Caco-2 (cell line): ENCODE measurements at regions of chr4 and their contacts with region 1.

Region 1: DNA sequence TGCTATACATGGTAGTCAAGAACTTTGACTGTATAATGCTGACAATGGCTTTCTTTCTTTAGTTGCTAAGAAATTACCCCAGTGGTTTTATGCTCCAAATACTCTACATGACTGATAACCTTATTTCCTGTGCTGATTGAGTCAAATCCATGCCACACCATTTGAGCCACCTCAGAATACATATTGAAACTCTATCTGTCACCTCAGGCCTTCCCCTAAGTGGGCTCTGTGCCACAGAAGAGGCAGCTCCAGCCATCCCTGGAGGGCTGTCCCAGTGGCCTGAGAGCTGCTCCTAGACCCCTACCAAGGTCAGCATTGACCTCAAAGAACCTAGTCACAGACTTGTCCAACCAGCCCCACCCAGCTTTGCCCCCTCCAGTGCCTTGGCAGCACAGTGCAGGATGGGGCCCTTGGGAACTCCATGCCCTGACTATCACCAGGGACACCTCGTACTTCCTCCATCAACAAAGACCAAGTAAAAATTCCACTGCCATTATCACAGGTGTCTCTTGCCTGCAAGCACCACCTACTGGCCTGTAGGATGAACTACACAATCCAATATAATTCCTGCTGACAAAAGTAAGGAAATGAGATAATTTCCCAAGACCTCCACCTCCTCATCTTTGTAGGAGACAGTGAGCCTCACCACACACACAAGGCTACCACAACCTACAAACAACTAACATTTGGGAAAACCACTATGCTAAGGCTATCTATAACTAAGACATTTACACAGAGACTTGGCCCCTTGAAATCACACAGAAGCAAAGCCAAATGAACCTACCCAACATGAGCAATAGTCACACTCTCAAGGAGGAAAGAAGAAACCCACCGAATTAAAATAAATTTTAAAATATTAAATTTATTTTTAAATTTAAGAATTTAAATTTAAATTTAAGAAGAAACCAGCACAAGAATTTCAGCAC is 239.9 kb downstream of the NKX6-1 start:
- DNase-seq: peak in 1 of 2 experiments; percentile 15
- H3K4me3 ChIP-seq: no peak overlapping the region
- H3K4me3 Mint-ChIP-seq: no peak overlapping the region
- H3K27ac Mint-ChIP-seq: no peak overlapping the region
- H3K4me1 ChIP-seq: 0 out of 2 replicates have a peak, but pooled peaks cover 4% of the 10 kb centered on the region
- H3K4me1 Mint-ChIP-seq: no peaks in the 10 kb centered on the region
- H3K27me3 ChIP-seq: no peaks in the 10 kb centered on the region
- H3K27me3 Mint-ChIP-seq: no peaks in the 10 kb centered on the region
- CTCF ChIP-seq: peak; percentile 31 to 53

Region 2: DNA sequence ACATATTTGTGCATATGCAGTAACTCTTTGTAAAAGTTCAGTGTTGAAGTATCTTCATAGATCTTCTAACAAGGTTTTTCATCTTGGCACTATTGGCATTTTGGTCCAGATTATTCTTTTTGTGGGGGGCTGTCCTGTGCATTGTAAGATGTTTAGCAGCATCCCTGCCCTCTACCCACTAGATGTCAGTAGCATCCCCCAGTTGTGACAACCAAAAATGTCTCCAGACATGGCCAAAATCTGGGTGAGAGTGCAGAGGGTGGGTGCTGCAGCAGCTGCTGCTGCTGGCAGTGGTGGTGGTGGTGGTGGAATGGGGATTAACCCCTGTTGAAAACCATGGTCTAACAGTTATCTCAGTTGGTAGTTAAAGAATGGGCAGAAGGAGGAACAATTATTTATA is 353.2 kb before region 1 on chr4:
- CTCF ChIA-PET with region 1: no interaction called
- POLR2A ChIA-PET with region 1: no interaction called
- intact Hi-C with region 1: loop called (anchors 1 kb)
- DNase-seq: peak; percentile 31 to 38
- H3K4me3 ChIP-seq: no peak overlapping the region
- H3K4me3 Mint-ChIP-seq: no peak overlapping the region
- H3K27ac Mint-ChIP-seq: no peak overlapping the region
- H3K4me1 ChIP-seq: no peaks in the 10 kb centered on the region
- H3K4me1 Mint-ChIP-seq: no peaks in the 10 kb centered on the region
- H3K27me3 ChIP-seq: no peaks in the 10 kb centered on the region
- H3K27me3 Mint-ChIP-seq: peaks cover 4% of the 10 kb centered on the region
- CTCF ChIP-seq: peak; percentile 48 to 62